ENCODE measurements at regions of chr4 and their contacts with region 1.

Region 1: DNA sequence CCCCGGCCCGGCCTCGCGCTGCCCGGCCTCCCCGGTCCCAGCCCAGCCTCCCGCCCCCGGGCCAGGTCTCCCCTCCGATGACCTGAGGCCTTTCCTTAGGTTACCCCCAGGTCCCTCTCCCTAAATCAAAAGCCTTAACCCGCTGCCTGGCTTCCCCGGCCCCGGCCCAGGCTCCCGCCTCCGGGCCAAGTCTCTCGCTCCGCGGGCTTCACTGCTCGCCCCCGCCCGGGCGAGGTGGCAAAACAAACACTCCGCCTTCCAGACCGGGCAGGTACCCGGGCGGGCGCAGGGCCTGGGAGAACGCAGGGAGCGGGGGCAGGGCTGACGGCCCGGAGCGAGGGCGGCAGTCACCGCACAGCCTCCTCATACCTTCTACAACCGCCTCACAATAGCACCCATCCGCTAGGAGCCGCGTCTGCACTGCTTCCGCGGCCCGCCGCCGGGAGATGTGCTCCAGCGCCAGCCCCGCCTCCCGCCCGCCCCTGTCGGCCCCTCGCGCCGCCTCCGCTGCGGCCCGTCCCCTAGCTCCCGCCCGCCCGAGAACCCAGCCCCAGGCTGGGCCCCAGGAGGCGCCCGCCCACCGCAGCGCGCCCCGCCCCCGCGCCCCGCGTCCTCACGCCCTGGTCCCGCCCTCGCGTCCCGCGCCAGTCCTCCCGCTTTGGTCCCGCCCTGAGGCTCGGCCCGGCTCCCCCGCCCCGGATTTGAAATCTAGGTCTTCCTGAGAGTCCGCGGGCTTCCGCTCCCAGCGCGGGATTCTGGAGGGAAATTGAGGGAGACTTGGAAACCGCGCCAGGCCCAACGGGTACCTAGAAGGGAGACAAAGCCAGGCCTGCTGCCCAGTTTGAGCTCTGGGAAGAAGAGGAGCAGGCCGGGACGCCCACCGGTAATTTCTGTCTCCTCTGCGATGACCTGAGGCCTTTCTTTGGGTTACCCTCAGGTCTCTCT is at the starts of genes CASP3 and PRIMPOL:
- DNase-seq: peak; percentile 99
- H3K4me3 Mint-ChIP-seq: peak within 1 kb of the TSS; percentile 99
- H3K27ac Mint-ChIP-seq: peak within 1 kb of the TSS; percentile 92
- H3K4me1 Mint-ChIP-seq: peaks cover 51% of the 10 kb centered on the region
- H3K27me3 Mint-ChIP-seq: no peaks in the 10 kb centered on the region
- total RNA-seq, gene CASP3: 84.8 and 89.8 TPM in 2 replicates
- total RNA-seq, gene PRIMPOL: 14.7 and 17.6 TPM in 2 replicates

Region 2: DNA sequence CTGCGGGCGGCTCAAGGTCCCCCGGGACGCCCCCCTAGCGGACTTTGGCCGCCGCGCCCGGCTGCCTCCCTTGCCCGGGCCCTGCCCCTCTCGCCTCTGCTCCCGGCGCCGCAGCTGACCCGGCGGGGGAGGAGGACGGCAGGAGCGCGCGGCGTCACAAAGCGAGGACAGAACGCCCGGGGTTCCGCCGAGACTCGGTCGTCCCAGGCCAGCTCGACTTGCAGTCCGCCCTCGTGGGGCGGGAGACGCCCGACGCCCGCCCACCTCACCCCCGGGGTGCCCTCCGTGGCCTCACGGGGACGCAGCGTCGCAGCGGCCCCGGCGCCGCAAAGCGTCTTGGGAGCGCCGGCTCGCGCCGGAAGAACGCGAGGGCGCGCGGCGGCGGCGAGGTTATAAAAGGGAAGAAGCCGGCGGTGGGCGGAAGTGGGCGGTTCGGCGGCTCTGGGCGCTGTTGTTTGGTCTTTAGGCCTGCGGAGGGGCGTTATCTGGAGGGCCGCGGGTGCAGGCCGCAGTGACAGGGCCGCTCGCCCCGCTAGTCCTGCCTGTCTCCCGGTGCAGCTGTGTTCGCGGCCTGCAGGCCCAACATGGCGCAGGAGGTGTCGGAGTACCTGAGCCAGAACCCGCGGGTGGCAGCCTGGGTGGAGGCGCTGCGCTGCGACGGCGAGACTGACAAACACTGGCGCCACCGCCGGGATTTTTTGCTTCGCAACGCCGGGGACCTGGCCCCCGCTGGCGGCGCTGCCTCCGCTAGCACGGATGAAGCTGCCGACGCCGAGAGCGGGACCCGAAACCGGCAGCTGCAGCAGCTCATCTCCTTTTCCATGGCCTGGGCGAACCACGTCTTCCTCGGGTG is 1204.9 kb before region 1 on chr4 and contains the start of gene CDKN2AIP:
- intact Hi-C with region 1: loop called (anchors 5 kb)
- DNase-seq: peak; percentile 98
- H3K4me3 Mint-ChIP-seq: peak within 1 kb of the TSS; percentile 96
- H3K27ac Mint-ChIP-seq: peak within 1 kb of the TSS; percentile 95
- H3K4me1 Mint-ChIP-seq: peaks cover 35% of the 10 kb centered on the region
- H3K27me3 Mint-ChIP-seq: no peaks in the 10 kb centered on the region
- total RNA-seq, gene CDKN2AIP: 22.7 and 23.1 TPM in 2 replicates

Region 3: GRCh38 chr4:184417802-184418511 is 231.3 kb before region 1 on chr4:
- intact Hi-C with region 1: loop called (anchors 2 kb)
- DNase-seq: peak; percentile 77
- H3K4me3 Mint-ChIP-seq: peak overlapping the region; percentile 56
- H3K27ac Mint-ChIP-seq: peak overlapping the region; percentile 86
- H3K4me1 Mint-ChIP-seq: peaks cover 68% of the 10 kb centered on the region
- H3K27me3 Mint-ChIP-seq: no peaks in the 10 kb centered on the region

Region 4: DNA sequence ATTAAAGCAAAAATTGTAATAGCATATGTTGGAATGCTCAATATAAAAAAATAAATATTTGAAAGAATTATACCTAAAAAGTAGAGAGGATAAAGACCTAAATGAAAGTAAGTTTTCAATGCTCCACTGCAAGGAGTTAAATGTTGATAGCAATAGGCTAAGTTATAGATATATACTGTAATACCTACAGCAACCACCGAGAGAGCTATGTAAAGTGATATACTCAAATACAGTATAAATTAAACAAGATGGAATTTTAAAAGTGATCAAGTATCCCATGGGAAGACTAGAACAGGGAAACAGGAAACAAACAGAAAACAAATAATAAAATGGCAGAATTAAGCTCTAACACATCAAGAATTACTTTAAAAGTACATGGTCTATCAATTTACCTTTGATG is 74.0 kb before region 1 on chr4:
- intact Hi-C with region 1: loop called (anchors 2 kb)
- DNase-seq: no peak
- H3K4me3 Mint-ChIP-seq: no peak overlapping the region
- H3K27ac Mint-ChIP-seq: peak overlapping the region; percentile 77
- H3K4me1 Mint-ChIP-seq: peaks cover 14% of the 10 kb centered on the region
- H3K27me3 Mint-ChIP-seq: no peaks in the 10 kb centered on the region

Region 5: DNA sequence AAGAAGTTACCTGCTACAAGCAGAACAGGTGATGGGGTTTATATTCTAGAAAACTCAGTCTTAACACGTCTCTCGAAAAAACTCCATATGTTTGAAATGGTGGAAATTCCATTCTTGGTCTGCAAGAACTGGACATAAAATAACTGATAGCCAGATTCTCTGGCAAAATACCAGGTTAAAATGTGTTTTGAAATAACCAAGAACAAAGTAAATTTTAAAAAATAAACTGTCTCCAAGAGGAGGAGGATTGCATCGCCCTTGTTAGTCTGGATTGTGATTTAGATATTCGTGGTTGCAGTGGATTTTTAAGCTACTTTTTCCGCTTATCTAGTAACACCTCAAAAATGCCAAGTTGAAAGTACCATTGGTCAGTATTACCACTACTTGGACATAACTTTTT is 43.8 kb after region 1 on chr4:
- intact Hi-C with region 1: loop called (anchors 5 kb)
- DNase-seq: peak; percentile 8
- H3K4me3 Mint-ChIP-seq: no peak overlapping the region
- H3K27ac Mint-ChIP-seq: no peak overlapping the region
- H3K4me1 Mint-ChIP-seq: peaks cover 10% of the 10 kb centered on the region
- H3K27me3 Mint-ChIP-seq: no peaks in the 10 kb centered on the region

Region 6: GRCh38 chr4:185471235-185472102 is 822.2 kb after region 1 on chr4 and contains the start of gene CCDC110:
- intact Hi-C with region 1: loop called (anchors 2 kb)
- DNase-seq: peak; percentile 95
- H3K4me3 Mint-ChIP-seq: peak within 1 kb of the TSS; percentile 83
- H3K27ac Mint-ChIP-seq: no peak within 1 kb of the TSS
- H3K4me1 Mint-ChIP-seq: peaks cover 8% of the 10 kb centered on the region
- H3K27me3 Mint-ChIP-seq: peaks cover 49% of the 10 kb centered on the region
- total RNA-seq, gene CCDC110: not detected in 2 replicates